ENCODE measurements at regions of chr15 and their contacts with region 1.

Region 1: DNA sequence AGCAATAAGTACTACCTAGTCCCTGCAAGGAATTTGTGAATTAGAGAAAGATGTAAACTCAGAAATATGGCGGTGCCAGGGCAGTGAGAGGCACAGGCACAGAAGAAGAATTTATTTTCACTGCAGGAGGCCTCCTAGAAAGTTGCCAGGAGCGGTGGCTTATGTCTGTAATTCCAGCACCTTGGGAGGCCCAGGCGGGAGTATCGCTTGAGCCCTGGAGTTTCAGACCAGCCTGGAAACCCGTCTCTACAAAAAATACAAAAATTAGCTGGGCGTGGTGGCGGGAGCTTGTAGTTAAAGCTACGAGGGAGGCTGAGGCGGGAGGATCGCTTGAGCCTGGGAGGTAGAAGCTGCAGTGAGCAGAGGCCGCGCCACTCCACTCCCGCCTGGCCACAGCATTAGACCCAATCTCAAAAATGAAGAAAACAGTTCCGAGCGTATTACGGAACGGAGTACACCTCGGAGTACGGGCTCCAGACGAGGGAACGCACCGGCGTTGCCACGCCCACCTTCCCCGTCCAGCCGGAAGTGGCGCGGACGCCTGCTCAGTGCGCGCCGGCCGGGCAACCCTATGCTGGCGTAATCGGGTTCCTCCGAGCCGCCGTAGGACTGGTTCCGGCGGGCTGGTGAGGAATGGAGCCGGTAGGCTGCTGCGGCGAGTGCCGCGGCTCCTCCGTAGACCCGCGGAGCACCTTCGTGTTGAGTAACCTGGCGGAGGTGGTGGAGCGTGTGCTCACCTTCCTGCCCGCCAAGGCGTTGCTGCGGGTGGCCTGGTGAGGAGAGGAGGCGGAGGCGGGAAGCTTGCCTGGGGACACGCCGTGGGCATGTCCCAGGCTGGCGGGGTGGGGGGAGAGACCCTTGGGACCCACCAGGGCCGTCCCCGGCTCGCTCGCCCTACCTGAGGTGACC is at the start of gene FBXO22:
- DNase-seq: peak; percentile 89 to 97 (median 94)
- ATAC-seq: peak; percentile 97 to 99 (median 98)
- H3K4me3 ChIP-seq: peak within 1 kb of the TSS; percentile 65 to 98 (median 84)
- H3K27ac ChIP-seq: peak within 1 kb of the TSS; percentile 46 to 82 (median 79)
- H3K4me1 ChIP-seq: peaks cover 0 to 6% (median 0%) of the 10 kb centered on the region in 3 donors
- H3K27me3 ChIP-seq: no peaks in the 10 kb centered on the region
- CTCF ChIP-seq: no peak
- total RNA-seq, gene FBXO22: 12.1 to 14.9 (median 12.7) TPM

Region 2: GRCh38 chr15:75696311-75696720 is 207.3 kb before region 1 on chr15:
- intact Hi-C with region 1: no loop called
- DNase-seq: peak in 1 of 6 donors; percentile 39
- ATAC-seq: no peak
- H3K4me3 ChIP-seq: no peak overlapping the region
- H3K27ac ChIP-seq: no peak overlapping the region
- H3K4me1 ChIP-seq: peaks cover 0 to 15% (median 11%) of the 10 kb centered on the region in 3 donors
- H3K27me3 ChIP-seq: no peaks in the 10 kb centered on the region
- CTCF ChIP-seq: no peak

Region 3: GRCh38 chr15:75842722-75843551 is 60.6 kb before region 1 on chr15 and contains the start of gene UBE2Q2:
- intact Hi-C with region 1: loop called in 1 of 3 experiments (anchors 10 kb)
- DNase-seq: peak in 5 of 6 donors; percentile 48 to 85 (median 68)
- ATAC-seq: peak; percentile 65 to 75 (median 71)
- H3K4me3 ChIP-seq: peak within 1 kb of the TSS; percentile 85 to 97 (median 92)
- H3K27ac ChIP-seq: peak within 1 kb of the TSS; percentile 69 to 77 (median 72)
- H3K4me1 ChIP-seq: peaks cover 0 to 26% (median 4%) of the 10 kb centered on the region in 3 donors
- H3K27me3 ChIP-seq: no peaks in the 10 kb centered on the region
- CTCF ChIP-seq: no peak
- total RNA-seq, gene UBE2Q2: 8.7 to 19.4 (median 10.6) TPM

Measured in pancreas (tissue), 10 donors.